Activated T-helper 1 cell treated with anti-CD3 and anti-CD28 coated beads, Interleukin-12 subunit alpha, Interleukin-12 subunit beta, Interleukin-2, Interleukin-4 antibody, amounts not matched to agents 30 ng/mL and 10 ng/mL and 1 ng/mL, durations not matched to agents 14 hours and 24 hours and 36 hours (primary cell): ENCODE measurements at regions of chr18 and their contacts with region 1.

Region 1: GRCh38 chr18:31658670-31659575 is 25.5 kb downstream of the B4GALT6 start:
- DNase-seq: peak; percentile 7
- H3K4me3 Mint-ChIP-seq: peak overlapping the region; percentile 20
- H3K27ac Mint-ChIP-seq: peak overlapping the region; percentile 74
- H3K4me1 Mint-ChIP-seq: peaks cover 21% of the 10 kb centered on the region
- H3K27me3 Mint-ChIP-seq: peaks cover 2% of the 10 kb centered on the region

Region 2: DNA sequence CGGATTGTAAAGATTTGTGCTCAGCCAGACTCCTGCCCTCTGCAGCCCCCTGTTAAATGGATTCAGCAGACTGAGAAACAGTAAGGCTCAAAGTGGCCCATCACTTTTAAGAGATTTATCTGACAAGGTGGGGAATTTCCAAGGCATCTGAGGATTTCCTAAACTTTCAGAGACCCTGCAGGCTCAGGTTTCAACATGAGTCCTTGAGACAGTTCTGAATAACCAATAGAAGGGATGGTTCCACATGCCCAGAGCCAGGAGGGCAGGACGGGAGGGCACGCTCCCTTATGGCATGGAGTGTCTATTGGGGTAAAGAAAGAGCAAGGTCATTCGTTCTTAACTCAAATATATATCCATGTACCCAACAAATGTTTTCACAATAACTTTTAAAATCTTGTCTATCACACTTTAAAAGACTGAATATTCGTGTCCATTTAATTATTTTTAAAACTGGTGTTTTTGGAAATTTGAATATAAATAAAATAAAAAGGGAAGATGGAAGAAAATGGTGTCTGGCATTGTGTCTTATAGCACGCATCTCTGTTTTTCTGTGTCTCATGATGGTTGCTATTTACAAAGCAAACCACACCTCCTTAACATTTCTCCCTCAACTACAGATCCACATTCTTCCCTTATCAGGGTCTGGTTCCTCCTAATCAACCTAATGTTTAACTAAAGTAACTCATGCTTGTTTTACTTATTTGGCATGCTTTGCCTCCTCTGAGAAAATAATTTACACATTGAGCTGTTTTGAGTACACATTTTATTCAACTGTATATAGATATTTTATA is 396.9 kb before region 1 on chr18:
- intact Hi-C with region 1: no loop called
- DNase-seq: no peak
- H3K4me3 Mint-ChIP-seq: no peak overlapping the region
- H3K27ac Mint-ChIP-seq: no peak overlapping the region
- H3K4me1 Mint-ChIP-seq: no peaks in the 10 kb centered on the region
- H3K27me3 Mint-ChIP-seq: no peaks in the 10 kb centered on the region

Region 3: DNA sequence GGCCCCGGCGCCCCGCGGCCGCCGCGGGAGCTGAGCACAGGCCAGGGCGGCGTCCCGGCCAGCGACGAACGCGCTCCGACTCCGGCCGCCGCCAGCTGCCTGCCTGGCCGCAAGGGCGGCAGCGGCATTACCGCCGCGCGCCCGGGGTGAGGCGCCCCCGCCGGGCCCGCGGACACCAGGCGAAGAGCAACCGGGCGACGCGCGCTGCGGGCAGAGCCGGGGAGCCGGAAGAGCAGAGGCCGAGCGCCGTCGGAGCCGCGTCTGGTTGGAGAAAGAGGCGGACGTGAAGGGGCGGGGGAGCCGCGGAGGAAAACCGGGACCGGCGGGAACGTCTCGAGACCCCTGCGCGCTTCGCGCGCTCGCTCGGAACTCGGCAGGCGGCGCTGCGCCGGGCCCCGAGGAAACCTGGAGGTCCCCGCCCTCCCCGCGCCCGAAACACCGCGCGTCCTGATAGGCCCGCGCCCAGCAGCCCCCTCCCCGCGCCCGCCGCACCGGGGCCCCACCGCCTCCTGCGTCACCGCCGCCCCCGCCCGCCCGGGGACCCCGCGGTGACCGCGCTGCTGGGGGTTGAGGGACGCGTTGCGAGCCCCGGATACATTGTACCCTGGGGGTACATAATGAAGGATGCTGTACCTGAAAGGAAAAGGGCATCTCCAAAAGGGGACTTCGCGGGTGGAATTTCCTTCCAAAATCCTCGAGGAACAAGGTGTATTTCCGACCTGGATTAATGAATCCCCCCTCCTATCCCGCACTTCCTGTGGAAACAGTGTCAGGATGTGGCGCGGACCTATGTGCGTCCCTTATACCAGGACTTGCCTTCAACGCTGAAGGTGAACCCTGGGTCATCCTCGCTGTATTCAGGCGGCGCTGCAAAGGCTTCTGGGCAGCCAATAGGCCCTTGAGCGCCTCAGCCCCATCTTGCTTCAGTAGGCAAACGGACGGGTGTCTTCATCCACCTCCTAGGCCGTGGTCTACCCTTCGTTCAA is 26.5 kb after region 1 on chr18:
- intact Hi-C with region 1: loop called (anchors 1 kb)
- DNase-seq: peak; percentile 28
- H3K4me3 Mint-ChIP-seq: peak overlapping the region; percentile 83
- H3K27ac Mint-ChIP-seq: peak overlapping the region; percentile 68
- H3K4me1 Mint-ChIP-seq: peaks cover 14% of the 10 kb centered on the region
- H3K27me3 Mint-ChIP-seq: peaks cover 47% of the 10 kb centered on the region

Region 4: GRCh38 chr18:31701744-31702143 is 42.8 kb after region 1 on chr18:
- intact Hi-C with region 1: no loop called
- DNase-seq: no peak
- H3K4me3 Mint-ChIP-seq: no peak overlapping the region
- H3K27ac Mint-ChIP-seq: no peak overlapping the region
- H3K4me1 Mint-ChIP-seq: no peaks in the 10 kb centered on the region
- H3K27me3 Mint-ChIP-seq: peaks cover 3% of the 10 kb centered on the region

Region 5: GRCh38 chr18:31760695-31761094 is 101.8 kb after region 1 on chr18 and contains the start of gene SLC25A52:
- intact Hi-C with region 1: no loop called
- DNase-seq: no peak
- H3K4me3 Mint-ChIP-seq: no peak within 1 kb of the TSS
- H3K27ac Mint-ChIP-seq: no peak within 1 kb of the TSS
- H3K4me1 Mint-ChIP-seq: no peaks in the 10 kb centered on the region
- H3K27me3 Mint-ChIP-seq: peaks cover 2% of the 10 kb centered on the region
- total RNA-seq, gene SLC25A52: not detected in 2 replicates

Region 6: GRCh38 chr18:31942999-31943865 is 284.3 kb after region 1 on chr18 and contains the start of gene TRAPPC8:
- intact Hi-C with region 1: loop called (anchors 1 kb)
- DNase-seq: peak; percentile 86
- H3K4me3 Mint-ChIP-seq: peak within 1 kb of the TSS; percentile 97
- H3K27ac Mint-ChIP-seq: peak within 1 kb of the TSS; percentile 95
- H3K4me1 Mint-ChIP-seq: peaks cover 40% of the 10 kb centered on the region
- H3K27me3 Mint-ChIP-seq: no peaks in the 10 kb centered on the region
- total RNA-seq, gene TRAPPC8: 36.7 and 41.6 TPM in 2 replicates

Region 7: GRCh38 chr18:32530947-32531651 is 872.2 kb after region 1 on chr18:
- intact Hi-C with region 1: loop called (anchors 5 kb)
- DNase-seq: no peak
- H3K4me3 Mint-ChIP-seq: no peak overlapping the region
- H3K27ac Mint-ChIP-seq: no peak overlapping the region
- H3K4me1 Mint-ChIP-seq: peaks cover 13% of the 10 kb centered on the region
- H3K27me3 Mint-ChIP-seq: peaks cover 15% of the 10 kb centered on the region